ENCODE measurements at regions of chr5 and their contacts with region 1.

Region 1: DNA sequence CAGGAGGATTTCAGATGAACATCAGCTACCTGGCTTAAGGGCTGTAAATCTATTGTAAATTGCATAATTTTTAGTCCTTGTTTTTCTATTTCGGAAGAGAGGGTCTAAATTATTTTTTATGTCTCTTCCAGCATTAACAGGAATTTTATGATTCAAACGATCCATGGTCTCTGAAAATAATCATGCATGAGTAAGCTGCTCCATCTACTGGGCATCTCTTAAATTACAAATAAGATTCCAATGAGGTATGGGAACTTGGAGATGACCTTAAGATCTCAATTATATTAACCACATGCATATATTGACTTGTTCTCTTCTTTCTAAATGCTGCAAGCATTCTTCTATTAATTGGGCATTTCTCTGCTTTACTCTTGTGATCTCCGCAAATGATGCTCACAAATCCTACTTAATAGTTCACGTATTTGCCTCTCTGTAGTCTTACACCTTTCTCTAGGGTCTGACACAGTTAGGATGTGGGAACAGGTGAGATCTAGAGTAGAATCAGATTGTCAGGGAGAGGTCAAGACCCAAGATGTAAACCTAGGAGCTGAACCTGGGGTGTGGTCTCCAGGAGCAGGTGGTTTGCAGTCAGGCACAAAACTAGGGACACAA is 86.9 kb downstream of the NUDT12 start:
- DNase-seq: peak; percentile 35
- ATAC-seq: peak; percentile 78
- H3K4me3 ChIP-seq: no peak overlapping the region
- H3K27ac ChIP-seq: no peak overlapping the region
- H3K4me1 ChIP-seq: no peaks in the 10 kb centered on the region
- H3K27me3 ChIP-seq: peaks cover 7% of the 10 kb centered on the region
- CTCF ChIP-seq: peak; percentile 72; the same call in 1 of the 2 replicates

Region 2: GRCh38 chr5:103232393-103232999 is 243.2 kb before region 1 on chr5:
- CTCF ChIA-PET with region 1: interaction called, 11 read pairs
- POLR2A ChIA-PET with region 1: interaction called, 3 read pairs
- in situ Hi-C with region 1: no loop called
- intact Hi-C with region 1: loop called (anchors 1 kb)
- DNase-seq: peak; percentile 39
- ATAC-seq: peak; percentile 93
- H3K4me3 ChIP-seq: no peak overlapping the region
- H3K27ac ChIP-seq: no peak overlapping the region
- H3K4me1 ChIP-seq: no peaks in the 10 kb centered on the region
- H3K27me3 ChIP-seq: no peaks in the 10 kb centered on the region
- CTCF ChIP-seq: peak; percentile 87; the same call in 1 of the 2 replicates

Measured in Panc1 (cell line).